ENCODE measurements at regions of chrX and their contacts with region 1.

Region 1: DNA sequence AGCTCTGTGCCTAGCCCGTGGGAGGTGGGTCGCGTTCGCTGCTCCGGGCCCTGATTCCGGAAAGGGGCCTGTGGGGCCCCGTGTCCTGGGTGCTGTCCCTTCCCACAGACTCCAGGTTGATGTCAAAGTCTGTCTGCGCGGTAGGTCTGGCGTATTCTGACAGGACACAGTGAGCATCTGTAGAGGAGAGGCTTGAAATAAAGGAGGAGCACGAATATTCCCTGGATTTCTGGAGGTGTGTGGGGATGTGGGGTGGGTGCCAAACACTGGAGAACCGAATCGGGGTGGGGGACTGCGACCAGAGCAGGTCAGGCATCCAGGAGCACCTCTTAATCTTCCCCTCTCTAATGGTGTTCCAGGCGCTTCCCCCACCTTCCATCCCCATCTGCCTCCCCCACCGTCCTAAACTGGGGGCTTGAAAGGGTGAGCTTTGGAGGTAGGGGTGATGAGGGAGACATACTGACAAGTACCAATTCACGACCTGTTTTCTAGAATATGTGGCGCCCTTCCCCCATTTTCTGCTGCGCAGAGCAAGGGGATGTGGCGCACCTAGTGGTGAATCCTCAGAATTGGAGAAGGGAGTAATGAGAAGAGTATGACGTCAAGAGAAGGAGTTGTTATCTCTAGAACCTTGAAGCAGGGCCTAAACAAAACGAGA is 877 bp downstream of the GPRASP1 start:
- DNase-seq: peak; percentile 79
- H3K4me3 Mint-ChIP-seq: peak overlapping the region; percentile 85
- H3K27ac Mint-ChIP-seq: no peak overlapping the region
- H3K4me1 Mint-ChIP-seq: peaks cover 9% of the 10 kb centered on the region
- H3K27me3 Mint-ChIP-seq: peaks cover 10% of the 10 kb centered on the region

Region 2: GRCh38 chrX:102720237-102721168 is 68.3 kb after region 1 on chrX and contains the start of gene GPRASP3:
- intact Hi-C with region 1: loop called (anchors 5 kb)
- DNase-seq: peak; percentile 91
- H3K4me3 Mint-ChIP-seq: peak within 1 kb of the TSS; percentile 89
- H3K27ac Mint-ChIP-seq: peak within 1 kb of the TSS; percentile 81
- H3K4me1 Mint-ChIP-seq: peaks cover 8% of the 10 kb centered on the region
- H3K27me3 Mint-ChIP-seq: no peaks in the 10 kb centered on the region
- total RNA-seq, gene GPRASP3: 0.56 and 1.7 TPM in 2 replicates

Measured in activated CD4-positive, alpha-beta T cell treated with anti-CD3 and anti-CD28 coated beads, Interleukin-2, amount 10 ng/mL, durations not matched to agents 24 days and 14 days (primary cell).